ENCODE measurements at regions of chr22 and their contacts with region 1.

Region 1: DNA sequence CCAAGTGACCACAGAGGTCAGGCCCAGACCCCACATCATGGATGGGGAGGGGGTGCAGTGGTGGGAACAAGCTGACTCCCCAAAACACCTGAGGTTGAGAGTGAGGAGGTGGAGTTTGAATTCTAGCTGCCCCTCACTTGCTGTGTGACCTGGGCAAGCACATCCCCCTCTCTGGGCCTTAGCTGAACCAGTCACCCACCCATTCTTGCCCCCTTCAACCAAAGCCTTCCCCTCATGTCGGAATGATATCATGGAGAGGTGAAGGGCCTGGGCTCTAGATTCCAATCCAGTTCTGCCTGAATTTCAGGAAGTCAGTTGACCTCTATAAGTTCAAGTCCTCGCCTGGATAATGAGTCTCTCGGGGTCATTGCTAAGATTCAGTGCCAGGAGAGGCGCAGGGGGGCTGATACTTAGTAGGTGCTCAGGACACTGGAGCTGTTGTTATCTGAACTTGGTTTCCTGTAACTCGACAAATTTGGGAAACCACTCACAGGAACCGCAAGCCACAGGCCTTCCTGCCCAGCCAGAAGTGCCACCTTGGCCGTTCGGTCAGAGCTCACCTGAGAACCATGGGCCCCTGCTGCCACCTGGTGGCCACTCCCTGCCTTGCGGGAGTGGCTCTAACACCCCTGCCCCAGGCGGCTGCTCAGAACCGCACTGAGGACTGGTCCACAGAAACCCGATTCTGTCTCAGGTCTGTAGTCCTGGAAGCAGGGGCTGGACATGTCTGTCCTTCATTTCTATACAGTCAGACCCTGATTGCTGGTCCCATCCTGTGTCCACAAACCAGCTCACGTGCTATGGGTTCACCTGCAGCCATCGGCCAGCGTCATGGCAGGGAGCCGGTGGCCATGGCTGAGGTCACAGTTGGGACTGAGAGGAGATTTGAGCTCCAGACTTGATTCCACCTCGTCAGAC is 6.9 kb downstream of the CDC42EP1 start:
- DNase-seq: peak; percentile 96
- ATAC-seq: peak; percentile 93
- H3K4me3 Mint-ChIP-seq: peak overlapping the region; percentile 43
- H3K27ac Mint-ChIP-seq: peak overlapping the region; percentile 87
- H3K4me1 Mint-ChIP-seq: peaks cover 23% of the 10 kb centered on the region
- H3K27me3 Mint-ChIP-seq: peaks cover 19% of the 10 kb centered on the region

Region 2: DNA sequence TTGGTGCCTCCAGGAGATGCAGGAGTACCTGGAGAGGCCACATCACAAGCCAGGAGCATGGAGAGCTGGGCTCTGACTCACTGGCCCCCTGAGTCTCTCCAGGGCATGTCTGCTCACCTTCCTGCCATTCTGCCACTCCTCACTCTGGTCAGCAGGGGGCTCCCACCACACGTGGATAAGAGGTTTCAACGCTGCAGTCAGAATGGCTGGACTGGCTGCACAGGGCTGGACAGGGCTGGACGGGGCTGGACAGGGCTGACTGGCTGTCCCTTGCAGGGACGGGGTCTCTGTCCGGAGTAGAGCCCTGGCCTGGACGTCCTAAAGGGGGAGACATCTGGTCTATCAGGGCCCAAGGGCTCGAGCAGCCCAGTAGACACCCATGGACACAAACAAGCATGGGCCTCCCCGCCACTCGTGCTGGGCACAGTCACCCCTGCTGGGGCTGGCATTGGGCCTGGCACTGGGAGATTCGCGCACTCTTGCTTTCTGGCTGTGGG is 250.2 kb before region 1 on chr22:
- CTCF ChIA-PET with region 1: interaction called, 3 read pairs
- POLR2A ChIA-PET with region 1: no interaction called
- intact Hi-C with region 1: loop called in 1 of 2 experiments (anchors 2 kb)
- DNase-seq: peak; percentile 86
- ATAC-seq: peak; percentile 77
- H3K4me3 Mint-ChIP-seq: no peak overlapping the region
- H3K27ac Mint-ChIP-seq: no peak overlapping the region
- H3K4me1 Mint-ChIP-seq: peaks cover 34% of the 10 kb centered on the region
- H3K27me3 Mint-ChIP-seq: no peaks in the 10 kb centered on the region

Region 3: GRCh38 chr22:37486224-37486845 is 80.8 kb before region 1 on chr22 and contains the start of gene MFNG:
- CTCF ChIA-PET with region 1: interaction called, 3 read pairs
- POLR2A ChIA-PET with region 1: interaction called, 5 read pairs
- intact Hi-C with region 1: loop called in 1 of 2 experiments (anchors 2 kb)
- DNase-seq: peak; percentile 89
- ATAC-seq: peak; percentile 70
- H3K4me3 Mint-ChIP-seq: peak within 1 kb of the TSS; percentile 92
- H3K27ac Mint-ChIP-seq: peak within 1 kb of the TSS; percentile 92
- H3K4me1 Mint-ChIP-seq: peaks cover 64% of the 10 kb centered on the region
- H3K27me3 Mint-ChIP-seq: no peaks in the 10 kb centered on the region
- total RNA-seq, gene MFNG: 108 to 125 TPM

Region 4: DNA sequence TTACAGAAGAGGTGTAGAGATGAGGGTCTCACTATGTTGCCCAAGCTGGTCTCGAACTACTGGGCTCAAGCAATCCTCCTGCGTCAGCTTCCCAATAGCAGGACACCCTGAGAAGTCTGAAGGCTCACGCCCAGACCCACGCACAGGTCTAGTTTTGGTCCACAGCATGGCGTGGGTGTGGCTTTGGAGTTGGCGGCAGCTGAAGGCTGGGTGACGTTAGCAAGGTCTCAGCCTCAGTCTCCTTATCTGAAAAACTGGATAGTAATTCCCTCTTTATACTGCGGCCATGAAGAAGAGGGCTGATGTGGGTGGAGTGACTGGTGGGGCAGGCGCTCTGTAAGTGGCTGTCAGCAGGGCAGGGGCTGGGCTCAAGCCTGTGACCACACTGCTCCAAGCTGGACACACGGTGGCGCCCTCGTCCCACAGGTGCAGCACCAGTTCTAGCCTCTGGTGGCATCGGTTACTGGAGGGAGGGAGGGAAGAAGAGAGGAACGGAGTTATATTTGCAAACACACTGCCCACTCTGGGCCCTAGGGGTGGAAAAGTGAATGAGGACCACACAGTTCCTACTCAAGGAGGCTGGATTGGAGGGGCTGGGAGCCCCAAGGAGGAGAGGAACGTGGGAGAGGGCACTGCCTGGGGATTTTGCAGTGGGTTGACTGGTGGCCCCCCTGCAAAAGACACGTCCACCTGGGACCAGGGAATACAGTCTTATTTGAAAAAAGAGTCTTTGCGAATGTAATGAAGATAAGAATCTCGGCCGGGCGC is 28.4 kb before region 1 on chr22:
- CTCF ChIA-PET with region 1: interaction called, 302 read pairs
- POLR2A ChIA-PET with region 1: interaction called, 16 read pairs
- intact Hi-C with region 1: loop called (anchors 1 kb)
- DNase-seq: peak; percentile 97
- ATAC-seq: peak; percentile 92
- H3K4me3 Mint-ChIP-seq: no peak overlapping the region
- H3K27ac Mint-ChIP-seq: peak overlapping the region; percentile 55
- H3K4me1 Mint-ChIP-seq: peaks cover 39% of the 10 kb centered on the region
- H3K27me3 Mint-ChIP-seq: peaks cover 12% of the 10 kb centered on the region

Region 5: GRCh38 chr22:37551981-37552380 is 15.2 kb before region 1 on chr22:
- CTCF ChIA-PET with region 1: interaction called, 302 read pairs
- POLR2A ChIA-PET with region 1: interaction called, 5 read pairs
- intact Hi-C with region 1: no loop called
- DNase-seq: no peak
- ATAC-seq: no peak
- H3K4me3 Mint-ChIP-seq: no peak overlapping the region
- H3K27ac Mint-ChIP-seq: no peak overlapping the region
- H3K4me1 Mint-ChIP-seq: no peaks in the 10 kb centered on the region
- H3K27me3 Mint-ChIP-seq: peaks cover 11% of the 10 kb centered on the region

Region 6: GRCh38 chr22:37588546-37589215 is 21.5 kb after region 1 on chr22:
- CTCF ChIA-PET with region 1: interaction called, 79 read pairs
- POLR2A ChIA-PET with region 1: interaction called, 12 read pairs
- intact Hi-C with region 1: loop called in 1 of 2 experiments (anchors 1 kb)
- DNase-seq: no peak
- ATAC-seq: no peak
- H3K4me3 Mint-ChIP-seq: no peak overlapping the region
- H3K27ac Mint-ChIP-seq: no peak overlapping the region
- H3K4me1 Mint-ChIP-seq: peaks cover 10% of the 10 kb centered on the region
- H3K27me3 Mint-ChIP-seq: no peaks in the 10 kb centered on the region

Measured in activated CD4-positive, alpha-beta T cell treated with anti-CD3 and anti-CD28 coated beads for 36 hours (primary cell).